Posterior cingulate gyrus (tissue), 11 donors: ENCODE measurements at regions of chr6 and their contacts with region 1.

Region 1: DNA sequence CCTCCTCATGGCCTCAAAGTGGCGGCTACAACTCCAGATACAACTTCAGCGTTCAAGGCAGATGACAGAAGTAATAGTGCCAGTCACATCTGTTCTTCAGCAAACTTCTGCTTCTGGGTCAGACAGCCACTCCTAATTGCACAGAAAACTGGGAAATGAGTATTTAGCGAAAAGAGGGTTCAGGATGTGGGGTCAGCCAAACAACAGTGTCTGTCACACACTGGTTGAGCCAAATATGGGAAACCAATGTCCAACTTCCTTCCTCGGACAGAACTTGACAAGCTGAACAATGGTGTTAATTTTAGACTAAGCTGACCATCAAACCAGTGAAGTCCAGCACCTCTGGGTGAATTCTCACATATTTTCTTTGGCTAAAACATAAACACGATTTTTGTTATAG is 22.1 kb downstream of the NUDT3 start:
- DNase-seq: no peak

Region 2: DNA sequence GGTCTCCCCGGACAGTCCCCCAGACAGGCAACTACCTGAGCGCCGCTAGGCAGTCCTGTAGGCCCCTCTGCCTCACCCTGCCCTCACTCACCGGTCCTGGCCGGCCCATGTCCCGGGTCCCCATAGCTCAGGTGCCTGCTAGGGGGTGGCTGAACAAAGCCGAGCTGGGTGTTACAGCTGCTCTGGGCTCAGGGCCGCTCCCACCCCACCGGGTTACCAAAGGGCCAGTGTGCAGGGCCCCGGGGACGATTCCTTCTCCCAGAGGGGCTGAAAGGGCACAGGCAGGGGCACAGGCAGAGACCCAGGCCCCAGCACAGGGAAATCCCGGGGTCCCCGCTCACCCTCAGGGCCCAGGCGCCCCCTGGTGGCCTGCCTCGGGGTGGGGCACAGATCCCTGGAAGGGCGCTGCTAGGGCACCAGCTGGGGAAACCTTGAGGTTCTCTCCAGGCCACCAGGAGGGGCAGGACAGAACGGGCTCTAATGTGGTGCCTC is 342.9 kb before region 1 on chr6:
- intact Hi-C with region 1: no loop called
- DNase-seq: peak in 4 of 10 donors; percentile 34 to 87 (median 66)

Region 3: DNA sequence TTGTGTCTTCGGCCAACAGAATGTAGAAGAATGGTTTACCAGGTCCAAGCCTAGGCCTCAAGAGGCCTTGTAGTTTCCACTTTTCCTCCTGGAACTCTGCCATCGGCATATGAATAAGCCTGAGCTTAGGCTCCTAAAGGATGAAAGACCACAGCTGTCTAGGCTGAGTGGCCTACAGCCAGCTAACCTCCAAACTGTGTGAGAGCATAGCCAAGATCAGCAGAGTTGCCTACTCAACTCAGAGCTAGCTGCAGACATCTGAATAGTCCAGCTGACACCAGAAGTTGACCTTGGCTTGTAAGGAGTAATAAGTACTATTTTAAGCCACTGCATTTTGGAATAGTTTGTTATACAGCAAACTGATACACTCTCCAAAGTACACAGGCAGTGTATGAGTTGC is 69.0 kb before region 1 on chr6:
- intact Hi-C with region 1: no loop called
- DNase-seq: no peak

Region 4: DNA sequence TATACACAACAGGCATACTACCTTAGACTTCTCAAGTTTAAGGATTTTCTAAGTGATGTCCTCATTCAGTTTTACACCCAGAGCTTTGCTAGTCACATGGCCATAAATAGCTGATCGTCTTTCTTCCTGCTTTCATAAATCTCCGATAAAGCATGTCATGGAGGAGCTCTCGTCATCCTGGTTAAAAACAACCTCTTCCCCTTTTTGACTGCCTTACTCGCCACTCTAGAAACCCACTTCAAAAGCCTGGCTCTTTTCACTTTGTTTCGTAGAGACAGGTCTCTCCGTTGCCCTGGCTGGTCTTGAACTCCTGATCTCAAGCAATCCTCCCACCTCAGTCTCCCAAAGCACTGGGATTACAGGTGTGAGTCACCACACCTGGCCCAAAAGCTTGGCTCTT is 54.6 kb before region 1 on chr6:
- intact Hi-C with region 1: loop called (anchors 10 kb)
- DNase-seq: no peak